CD8-positive, alpha-beta T cell (primary cell): ENCODE measurements at regions of chr7 and their contacts with region 1.

Region 1: DNA sequence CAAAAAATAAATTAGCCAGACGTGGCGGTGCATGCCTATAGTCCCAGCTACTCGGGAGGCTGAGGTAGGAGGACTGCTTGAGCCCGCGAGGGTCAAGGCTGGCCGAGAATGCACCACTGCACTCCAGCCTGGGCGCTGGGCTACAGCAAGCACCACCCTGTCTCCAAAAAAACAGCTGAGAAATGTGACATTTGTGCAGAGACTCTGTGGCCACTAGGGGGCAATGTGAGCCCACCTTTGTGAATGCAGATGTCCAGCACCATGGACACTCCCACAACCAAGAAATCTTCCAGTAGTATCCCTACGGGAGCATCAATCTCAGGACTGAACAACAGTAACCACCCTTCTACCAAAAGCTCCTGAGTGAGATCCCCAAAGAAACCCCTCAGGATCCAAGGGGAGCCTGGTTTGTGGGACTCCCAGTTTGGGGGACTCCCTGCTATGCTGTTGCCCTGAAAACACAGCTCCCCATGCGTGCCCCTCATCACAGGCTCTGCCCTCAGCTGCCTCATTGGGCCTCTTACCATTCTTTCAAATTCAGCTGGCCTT is 6.2 kb upstream of the AHCYL2 start:
- DNase-seq: peak; percentile 48 to 87 (median 80)
- ATAC-seq: peak; percentile 91
- H3K4me3 ChIP-seq: no peak overlapping the region
- H3K4me3 Mint-ChIP-seq: no peak overlapping the region
- H3K27ac ChIP-seq: no peak overlapping the region
- H3K27ac Mint-ChIP-seq: no peak overlapping the region
- H3K4me1 ChIP-seq: peaks cover 12% of the 10 kb centered on the region
- H3K4me1 Mint-ChIP-seq: peaks cover 13% of the 10 kb centered on the region
- H3K27me3 ChIP-seq: no peaks in the 10 kb centered on the region
- H3K27me3 Mint-ChIP-seq: peaks cover 4% of the 10 kb centered on the region
- CTCF ChIP-seq: peak; percentile 94

Region 2: GRCh38 chr7:129017933-129018538 is 200.6 kb before region 1 on chr7:
- CTCF ChIA-PET with region 1: no interaction called
- POLR2A ChIA-PET with region 1: no interaction called
- intact Hi-C with region 1: no loop called
- DNase-seq: no peak
- ATAC-seq: no peak
- H3K4me3 ChIP-seq: no peak overlapping the region
- H3K4me3 Mint-ChIP-seq: no peak overlapping the region
- H3K27ac ChIP-seq: no peak overlapping the region
- H3K27ac Mint-ChIP-seq: no peak overlapping the region
- H3K4me1 ChIP-seq: no peaks in the 10 kb centered on the region
- H3K4me1 Mint-ChIP-seq: peaks cover 17% of the 10 kb centered on the region
- H3K27me3 ChIP-seq: no peaks in the 10 kb centered on the region
- H3K27me3 Mint-ChIP-seq: no peaks in the 10 kb centered on the region
- CTCF ChIP-seq: no peak

Region 3: GRCh38 chr7:129163875-129164544 is 54.6 kb before region 1 on chr7:
- CTCF ChIA-PET with region 1: interaction called, 71 read pairs
- POLR2A ChIA-PET with region 1: no interaction called
- intact Hi-C with region 1: no loop called
- DNase-seq: peak in 3 of 9 experiments; percentile 18 to 69 (median 61)
- ATAC-seq: peak; percentile 54
- H3K4me3 ChIP-seq: no peak overlapping the region
- H3K4me3 Mint-ChIP-seq: no peak overlapping the region
- H3K27ac ChIP-seq: no peak overlapping the region
- H3K27ac Mint-ChIP-seq: no peak overlapping the region
- H3K4me1 ChIP-seq: peaks cover 4% of the 10 kb centered on the region
- H3K4me1 Mint-ChIP-seq: peaks cover 7% of the 10 kb centered on the region
- H3K27me3 ChIP-seq: no peaks in the 10 kb centered on the region
- H3K27me3 Mint-ChIP-seq: no peaks in the 10 kb centered on the region
- CTCF ChIP-seq: peak; percentile 86

Region 4: DNA sequence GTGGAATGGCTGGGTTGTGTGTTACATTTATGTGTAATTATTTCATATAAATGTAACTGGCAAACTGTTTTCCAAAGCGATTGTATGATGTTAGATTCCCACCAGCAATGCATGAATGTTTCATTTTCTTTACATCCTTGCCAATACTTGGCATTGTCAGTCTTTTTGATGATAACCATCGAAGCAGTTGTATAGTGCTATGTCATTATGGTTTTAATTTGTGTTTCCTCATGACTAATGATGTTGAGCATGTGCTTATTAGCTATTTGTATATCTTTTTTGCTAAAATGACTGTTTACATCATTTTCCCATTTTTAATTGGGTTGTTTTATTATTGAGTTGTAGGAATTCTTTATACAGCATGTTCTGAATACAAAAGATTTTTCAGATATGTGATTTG is 28.5 kb after region 1 on chr7:
- CTCF ChIA-PET with region 1: interaction called, 37 read pairs
- POLR2A ChIA-PET with region 1: no interaction called
- intact Hi-C with region 1: no loop called
- DNase-seq: no peak
- ATAC-seq: no peak
- H3K4me3 ChIP-seq: no peak overlapping the region
- H3K4me3 Mint-ChIP-seq: no peak overlapping the region
- H3K27ac ChIP-seq: no peak overlapping the region
- H3K27ac Mint-ChIP-seq: no peak overlapping the region
- H3K4me1 ChIP-seq: peaks cover 2% of the 10 kb centered on the region
- H3K4me1 Mint-ChIP-seq: peaks cover 12% of the 10 kb centered on the region
- H3K27me3 ChIP-seq: no peaks in the 10 kb centered on the region
- H3K27me3 Mint-ChIP-seq: no peaks in the 10 kb centered on the region
- CTCF ChIP-seq: no peak

Region 5: GRCh38 chr7:129271500-129272355 is 53.1 kb after region 1 on chr7:
- CTCF ChIA-PET with region 1: interaction called, 266 read pairs
- POLR2A ChIA-PET with region 1: interaction called, 6 read pairs
- intact Hi-C with region 1: loop called (anchors 1 kb)
- DNase-seq: peak; percentile 35 to 86 (median 67)
- ATAC-seq: peak; percentile 100
- H3K4me3 ChIP-seq: no peak overlapping the region
- H3K4me3 Mint-ChIP-seq: peak overlapping the region; percentile 72
- H3K27ac ChIP-seq: no peak overlapping the region
- H3K27ac Mint-ChIP-seq: no peak overlapping the region
- H3K4me1 ChIP-seq: no peaks in the 10 kb centered on the region
- H3K4me1 Mint-ChIP-seq: peaks cover 6% of the 10 kb centered on the region
- H3K27me3 ChIP-seq: no peaks in the 10 kb centered on the region
- H3K27me3 Mint-ChIP-seq: no peaks in the 10 kb centered on the region
- CTCF ChIP-seq: peak; percentile 78

Region 6: GRCh38 chr7:129298268-129298893 is 79.8 kb after region 1 on chr7:
- CTCF ChIA-PET with region 1: interaction called, 83 read pairs
- POLR2A ChIA-PET with region 1: no interaction called
- intact Hi-C with region 1: loop called (anchors 1 kb)
- DNase-seq: peak in 8 of 9 experiments; percentile 19 to 63 (median 54)
- ATAC-seq: no peak
- H3K4me3 ChIP-seq: no peak overlapping the region
- H3K4me3 Mint-ChIP-seq: no peak overlapping the region
- H3K27ac ChIP-seq: no peak overlapping the region
- H3K27ac Mint-ChIP-seq: no peak overlapping the region
- H3K4me1 ChIP-seq: no peaks in the 10 kb centered on the region
- H3K4me1 Mint-ChIP-seq: no peaks in the 10 kb centered on the region
- H3K27me3 ChIP-seq: no peaks in the 10 kb centered on the region
- H3K27me3 Mint-ChIP-seq: no peaks in the 10 kb centered on the region
- CTCF ChIP-seq: peak; percentile 70

Region 7: DNA sequence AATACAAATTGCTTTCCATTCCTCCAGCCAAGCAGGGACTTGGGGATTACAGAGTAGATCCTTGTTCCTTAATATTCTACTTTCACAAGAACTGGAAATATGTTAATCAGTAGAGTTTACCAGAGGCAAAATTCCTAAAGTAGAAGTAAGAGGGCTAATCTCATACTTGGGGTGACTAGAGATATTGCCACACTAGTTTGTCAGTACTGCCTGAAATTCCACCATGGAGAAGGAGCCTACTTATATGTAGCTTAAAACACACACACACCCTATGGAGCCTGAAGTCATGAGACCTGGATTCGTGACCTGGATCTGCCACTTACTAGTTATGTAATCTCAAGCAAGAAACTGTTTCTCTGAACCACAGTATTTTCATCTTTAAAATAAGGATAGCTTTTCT is 249.5 kb after region 1 on chr7:
- CTCF ChIA-PET with region 1: interaction called, 6 read pairs
- POLR2A ChIA-PET with region 1: no interaction called
- intact Hi-C with region 1: loop called (anchors 1 kb)
- DNase-seq: no peak
- ATAC-seq: no peak
- H3K4me3 ChIP-seq: no peak overlapping the region
- H3K4me3 Mint-ChIP-seq: no peak overlapping the region
- H3K27ac ChIP-seq: no peak overlapping the region
- H3K27ac Mint-ChIP-seq: no peak overlapping the region
- H3K4me1 ChIP-seq: no peaks in the 10 kb centered on the region
- H3K4me1 Mint-ChIP-seq: peaks cover 2% of the 10 kb centered on the region
- H3K27me3 ChIP-seq: no peaks in the 10 kb centered on the region
- H3K27me3 Mint-ChIP-seq: no peaks in the 10 kb centered on the region
- CTCF ChIP-seq: no peak